Dorsolateral prefrontal cortex (tissue), 120 donors: ENCODE measurements at regions of chr11 and their contacts with region 1.

Region 1: GRCh38 chr11:124586238-124586860 is 16.6 kb downstream of the OR8A1 start:
- DNase-seq: peak; percentile 23 to 74 (median 55)
- H3K4me3 ChIP-seq: no peak overlapping the region
- H3K27ac ChIP-seq: no peak overlapping the region
- H3K27me3 ChIP-seq: peaks cover 0 to 11% (median 0%) of the 10 kb centered on the region in 45 donors
- CTCF ChIP-seq: peak; percentile 45 to 80 (median 67)

Region 2: GRCh38 chr11:124070915-124071635 is 515.3 kb before region 1 on chr11:
- intact Hi-C with region 1: loop called in 1 of 2 experiments (anchors 5 kb)
- DNase-seq: peak in 9 of 10 donors; percentile 32 to 80 (median 71)
- H3K4me3 ChIP-seq: peak overlapping the region in 27 of 59 donors; percentile 4 to 47 (median 26)
- H3K27ac ChIP-seq: no peak overlapping the region
- H3K27me3 ChIP-seq: peaks cover 0 to 43% (median 5%) of the 10 kb centered on the region in 45 donors
- CTCF ChIP-seq: peak; percentile 73 to 94 (median 86)

Region 3: GRCh38 chr11:124409906-124410305 is 176.4 kb before region 1 on chr11:
- intact Hi-C with region 1: loop called (anchors 5 kb)
- DNase-seq: no peak
- H3K4me3 ChIP-seq: no peak overlapping the region
- H3K27ac ChIP-seq: peak overlapping the region in 15 of 59 donors; percentile 2 to 63 (median 18)
- H3K27me3 ChIP-seq: peaks cover 0 to 13% (median 0%) of the 10 kb centered on the region in 45 donors
- CTCF ChIP-seq: no peak

Region 4: DNA sequence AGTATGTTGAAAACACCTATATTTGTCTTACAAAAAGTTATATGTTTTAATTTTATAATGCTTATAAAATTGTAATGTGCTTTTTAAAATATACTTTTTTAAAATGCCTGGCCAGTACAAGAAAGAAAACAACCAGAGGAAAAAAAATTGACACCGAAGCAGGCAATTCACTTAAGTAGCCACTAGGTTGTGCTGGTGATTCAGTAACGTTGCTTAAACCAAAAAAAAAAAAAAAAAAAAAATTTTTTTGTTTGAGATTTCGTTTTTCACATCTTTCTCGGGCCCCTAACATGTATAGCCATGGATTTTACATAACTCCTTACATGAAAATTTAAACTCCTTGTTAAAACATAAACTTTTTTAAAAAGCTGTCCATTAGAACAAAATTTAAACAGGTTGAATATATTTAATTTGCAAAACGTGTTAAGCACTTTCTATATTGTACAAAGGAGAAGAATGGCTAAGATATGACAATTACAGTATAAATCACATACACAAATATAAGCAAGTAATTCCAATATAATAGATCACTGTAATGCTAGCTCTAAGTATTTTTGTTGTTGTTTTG is 170.9 kb before region 1 on chr11:
- intact Hi-C with region 1: loop called (anchors 5 kb)
- DNase-seq: no peak
- H3K4me3 ChIP-seq: no peak overlapping the region
- H3K27ac ChIP-seq: peak overlapping the region in 18 of 59 donors; percentile 8 to 66 (median 37)
- H3K27me3 ChIP-seq: peaks cover 0 to 14% (median 0%) of the 10 kb centered on the region in 45 donors
- CTCF ChIP-seq: peak; percentile 31 to 84 (median 64)

Region 5: GRCh38 chr11:124551189-124551588 is 35.2 kb before region 1 on chr11:
- intact Hi-C with region 1: no loop called
- DNase-seq: no peak
- H3K4me3 ChIP-seq: no peak overlapping the region
- H3K27ac ChIP-seq: no peak overlapping the region
- H3K27me3 ChIP-seq: no peaks in the 10 kb centered on the region
- CTCF ChIP-seq: no peak

Region 6: GRCh38 chr11:124644426-124645280 is 58.3 kb after region 1 on chr11:
- intact Hi-C with region 1: no loop called
- DNase-seq: peak in 9 of 10 donors; percentile 35 to 72 (median 60)
- H3K4me3 ChIP-seq: peak overlapping the region in 47 of 59 donors; percentile 2 to 58 (median 36)
- H3K27ac ChIP-seq: peak overlapping the region in 11 of 59 donors; percentile 10 to 57 (median 40)
- H3K27me3 ChIP-seq: no peaks in the 10 kb centered on the region
- CTCF ChIP-seq: peak; percentile 67 to 93 (median 85)

Region 7: DNA sequence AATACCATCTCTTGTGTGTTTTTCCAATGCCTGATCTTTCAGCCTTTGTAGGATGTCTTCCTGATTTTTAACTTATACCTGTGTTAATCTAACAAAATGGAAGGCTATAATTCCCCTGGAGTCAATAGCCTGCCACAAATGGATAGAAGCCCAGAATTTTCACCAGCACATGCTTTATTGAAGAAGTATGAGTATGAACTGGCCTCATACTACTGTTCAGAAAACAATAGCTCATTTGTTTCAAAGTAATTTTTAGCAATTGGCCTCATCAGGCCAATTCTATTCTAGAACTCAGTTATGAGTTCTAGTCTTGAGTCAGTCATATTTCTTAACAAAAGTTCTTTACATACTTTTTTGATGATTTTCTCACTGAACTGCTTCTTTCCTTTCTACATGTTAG is 436.2 kb after region 1 on chr11:
- intact Hi-C with region 1: no loop called
- DNase-seq: no peak
- H3K4me3 ChIP-seq: no peak overlapping the region
- H3K27ac ChIP-seq: no peak overlapping the region
- H3K27me3 ChIP-seq: no peaks in the 10 kb centered on the region
- CTCF ChIP-seq: no peak